Activated CD4-positive, alpha-beta memory T cell treated with anti-CD3 and anti-CD28 coated beads for 36 hours (primary cell): ENCODE measurements at regions of chr13 and their contacts with region 1.

Region 1: GRCh38 chr13:99221567-99222239 is 21.0 kb downstream of the UBAC2 start:
- DNase-seq: no peak
- H3K4me3 Mint-ChIP-seq: no peak overlapping the region
- H3K27ac Mint-ChIP-seq: peak overlapping the region; percentile 18
- H3K4me1 Mint-ChIP-seq: peaks cover 89% of the 10 kb centered on the region
- H3K27me3 Mint-ChIP-seq: no peaks in the 10 kb centered on the region

Region 2: GRCh38 chr13:98856983-98857382 is 364.7 kb before region 1 on chr13:
- CTCF ChIA-PET with region 1: no interaction called
- POLR2A ChIA-PET with region 1: no interaction called
- intact Hi-C with region 1: no loop called
- DNase-seq: no peak
- H3K4me3 Mint-ChIP-seq: no peak overlapping the region
- H3K27ac Mint-ChIP-seq: no peak overlapping the region
- H3K4me1 Mint-ChIP-seq: peaks cover 12% of the 10 kb centered on the region
- H3K27me3 Mint-ChIP-seq: no peaks in the 10 kb centered on the region

Region 3: DNA sequence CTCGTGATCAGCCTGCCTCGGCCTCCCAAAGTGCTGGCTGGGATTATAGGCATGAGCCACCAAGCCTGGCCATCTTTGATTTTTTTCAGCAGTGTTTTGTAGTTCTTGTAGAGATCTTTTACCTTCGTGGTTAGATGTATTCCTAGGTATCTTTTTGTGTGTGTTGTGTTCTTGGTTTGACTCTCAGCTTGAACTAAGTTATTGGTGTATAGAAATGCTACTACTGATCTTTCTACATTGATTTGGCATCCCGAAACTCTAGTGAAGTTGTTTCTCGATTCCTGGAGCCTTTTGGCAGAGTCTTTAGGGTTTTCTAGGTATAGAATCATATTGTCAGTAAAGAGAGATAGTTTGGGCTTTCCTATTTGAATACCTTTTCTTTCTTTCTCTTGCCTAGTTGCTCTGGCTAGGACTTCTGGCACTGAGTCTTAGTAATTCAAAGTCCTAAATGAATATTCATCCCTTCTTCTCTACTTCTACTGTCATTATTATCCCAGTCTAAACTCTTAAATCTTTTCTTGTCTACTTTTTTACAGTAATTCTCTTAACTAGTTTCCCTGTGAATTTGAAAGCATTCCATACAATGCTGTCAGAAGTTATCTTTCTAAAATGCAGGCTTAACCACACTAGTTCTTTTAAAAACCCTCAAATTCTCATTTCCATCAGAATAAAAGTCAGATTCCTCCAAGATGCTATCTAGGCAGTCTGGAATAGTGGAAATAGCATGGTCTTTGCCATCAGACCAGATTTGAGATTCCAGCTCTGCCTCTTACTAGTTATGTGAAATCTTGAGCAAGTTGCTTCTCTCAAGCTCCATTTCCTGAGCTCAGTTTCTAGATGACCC is 29.5 kb after region 1 on chr13:
- CTCF ChIA-PET with region 1: no interaction called
- POLR2A ChIA-PET with region 1: interaction called, 5 read pairs
- intact Hi-C with region 1: loop called (anchors 1 kb)
- DNase-seq: no peak
- H3K4me3 Mint-ChIP-seq: no peak overlapping the region
- H3K27ac Mint-ChIP-seq: peak overlapping the region; percentile 68
- H3K4me1 Mint-ChIP-seq: peaks cover 48% of the 10 kb centered on the region
- H3K27me3 Mint-ChIP-seq: no peaks in the 10 kb centered on the region

Region 4: GRCh38 chr13:99374994-99375737 is 153.5 kb after region 1 on chr13:
- CTCF ChIA-PET with region 1: no interaction called
- POLR2A ChIA-PET with region 1: no interaction called
- intact Hi-C with region 1: no loop called
- DNase-seq: peak; percentile 21
- H3K4me3 Mint-ChIP-seq: no peak overlapping the region
- H3K27ac Mint-ChIP-seq: no peak overlapping the region
- H3K4me1 Mint-ChIP-seq: peaks cover 76% of the 10 kb centered on the region
- H3K27me3 Mint-ChIP-seq: no peaks in the 10 kb centered on the region

Region 5: DNA sequence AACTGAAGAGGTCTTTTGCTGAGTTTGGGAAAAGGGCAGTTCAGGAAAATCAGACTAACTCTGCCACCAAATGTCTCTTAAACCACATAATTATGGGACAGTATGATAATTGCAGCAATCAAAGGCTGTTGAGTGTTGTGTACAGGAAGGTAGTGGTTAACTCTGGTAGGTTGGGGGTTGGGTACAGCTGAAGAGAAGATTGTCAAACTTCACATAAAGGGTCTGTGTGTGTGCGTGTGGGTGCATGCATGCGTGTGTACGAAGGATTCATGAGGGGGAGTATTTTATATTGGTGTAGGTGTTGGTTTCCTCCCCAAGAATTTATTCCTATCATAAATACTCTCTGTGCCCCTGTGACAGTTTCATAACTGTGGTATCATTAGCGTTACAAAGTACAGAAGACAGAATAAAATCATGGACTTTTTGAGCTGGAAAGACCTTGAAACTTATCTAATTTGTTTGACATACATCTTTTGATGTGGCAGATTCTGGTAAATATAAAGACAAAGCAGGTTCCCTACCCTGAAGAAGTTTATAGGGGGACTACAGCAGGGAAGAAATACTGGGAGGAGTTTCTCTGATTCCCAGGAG is 961.3 kb after region 1 on chr13:
- CTCF ChIA-PET with region 1: no interaction called
- POLR2A ChIA-PET with region 1: no interaction called
- intact Hi-C with region 1: no loop called
- DNase-seq: no peak
- H3K4me3 Mint-ChIP-seq: no peak overlapping the region
- H3K27ac Mint-ChIP-seq: no peak overlapping the region
- H3K4me1 Mint-ChIP-seq: peaks cover 20% of the 10 kb centered on the region
- H3K27me3 Mint-ChIP-seq: no peaks in the 10 kb centered on the region